ENCODE measurements at regions of chr9 and their contacts with region 1.

Region 1: DNA sequence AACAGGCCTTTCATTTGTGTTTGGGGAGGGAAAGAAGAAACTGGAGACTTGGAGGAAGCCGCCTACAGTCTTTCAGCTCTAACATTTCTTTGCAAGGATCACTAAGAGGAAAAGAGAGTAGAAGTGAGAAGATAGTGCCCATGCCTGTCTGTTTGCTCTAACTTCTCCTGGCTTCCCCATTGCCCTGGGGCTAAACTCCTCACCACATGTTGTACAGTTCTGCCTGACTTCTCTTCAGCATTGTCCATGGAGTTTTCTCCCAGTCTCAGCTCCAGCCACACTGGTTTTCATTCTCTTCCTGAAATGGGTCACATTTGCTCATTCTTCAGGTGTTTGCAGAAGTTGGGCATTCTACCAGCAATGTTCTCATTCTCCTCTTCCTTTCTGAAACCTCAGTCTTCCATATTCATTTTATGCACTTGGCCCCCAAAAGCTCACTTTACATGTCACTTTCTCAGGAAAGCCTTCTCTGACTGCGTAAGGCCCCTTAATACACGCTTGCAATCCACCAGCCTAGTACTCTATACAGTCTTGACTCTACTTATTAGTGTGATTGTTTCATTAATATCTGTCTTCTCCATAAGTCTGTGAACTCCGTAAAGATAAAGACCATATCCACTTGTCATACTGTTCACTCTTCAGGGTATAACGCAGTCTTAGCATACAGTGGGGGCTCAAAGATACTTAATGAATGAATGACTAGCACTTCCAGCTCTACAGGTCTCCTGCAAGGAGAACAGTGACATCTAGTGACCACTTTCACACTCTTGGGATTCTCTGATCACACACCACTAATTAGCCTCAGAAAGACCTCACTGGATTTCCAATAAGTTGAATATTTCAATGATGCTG is 40.2 kb upstream of the TRIM32 start:
- DNase-seq: peak; percentile 61
- ATAC-seq: peak; percentile 80
- H3K4me3 ChIP-seq: no peak overlapping the region
- H3K27ac ChIP-seq: no peak overlapping the region
- H3K4me1 ChIP-seq: peaks cover 4% of the 10 kb centered on the region
- H3K27me3 ChIP-seq: no peaks in the 10 kb centered on the region
- CTCF ChIP-seq: peak; percentile 72
- POLR2A ChIP-seq: no peak
- RAD21 ChIP-seq: peak; percentile 79

Region 2: GRCh38 chr9:116377479-116377779 is 269.5 kb before region 1 on chr9:
- CTCF ChIA-PET with region 1: no interaction called
- POLR2A ChIA-PET with region 1: no interaction called
- dilution Hi-C with region 1: no loop called
- in situ Hi-C with region 1: no loop called
- intact Hi-C with region 1: loop called (anchors 10 kb)
- DNase-seq: peak; percentile 75
- ATAC-seq: peak; percentile 86
- H3K4me3 ChIP-seq: no peak overlapping the region
- H3K27ac ChIP-seq: 0 out of 2 replicates have a peak overlapping the region, but pooled peaks have one; percentile 4
- H3K4me1 ChIP-seq: peaks cover 17% of the 10 kb centered on the region
- H3K27me3 ChIP-seq: no peaks in the 10 kb centered on the region
- CTCF ChIP-seq: no peak
- POLR2A ChIP-seq: no peak
- RAD21 ChIP-seq: no peak

Region 3: DNA sequence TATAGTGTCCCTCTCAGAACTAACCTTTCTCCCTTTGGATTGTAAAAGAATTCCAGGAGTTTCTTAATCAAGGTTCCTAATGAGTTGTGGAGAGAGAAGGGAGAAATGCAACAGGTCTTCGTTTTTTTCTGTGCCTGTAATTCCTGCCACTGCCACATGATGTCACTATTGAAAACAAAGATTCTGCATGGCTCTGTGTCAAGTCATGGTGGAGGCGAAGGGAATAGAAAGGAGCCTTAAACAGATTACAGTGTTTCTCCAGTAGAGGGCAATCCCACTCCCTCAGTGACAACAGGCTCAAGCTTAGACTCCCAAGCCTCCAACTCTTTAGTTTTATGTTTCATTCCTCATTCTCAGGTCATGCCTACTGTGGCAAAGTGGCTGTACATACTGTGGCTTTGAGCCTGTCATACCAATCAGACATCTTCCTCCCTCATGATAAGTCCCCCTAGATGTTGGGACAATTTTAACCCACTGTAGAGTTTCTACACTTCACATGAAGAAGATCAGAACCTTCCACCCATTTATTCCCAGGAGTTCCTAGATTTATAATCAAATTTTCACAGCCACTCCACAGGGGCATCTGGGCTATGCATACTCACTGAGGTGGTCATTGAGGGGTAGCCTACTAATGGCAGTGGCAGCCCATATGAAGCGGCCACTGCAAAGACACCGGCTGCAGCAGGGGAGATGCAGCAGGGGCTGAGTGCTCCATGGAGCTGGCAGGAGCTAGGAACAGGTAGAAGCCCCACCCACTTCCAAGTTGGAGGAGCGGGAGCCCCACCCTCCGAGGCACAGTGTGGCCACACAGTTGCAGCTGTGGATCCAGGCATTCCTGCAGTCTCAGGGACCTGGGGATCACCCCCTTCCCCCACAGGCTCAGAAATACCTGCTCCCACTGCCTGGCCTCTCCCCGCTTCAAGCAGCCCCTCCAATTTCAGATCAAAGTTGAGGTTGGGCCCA is 57.2 kb before region 1 on chr9:
- CTCF ChIA-PET with region 1: interaction called, 3 read pairs
- POLR2A ChIA-PET with region 1: no interaction called
- dilution Hi-C with region 1: no loop called
- in situ Hi-C with region 1: no loop called
- intact Hi-C with region 1: loop called (anchors 1 kb)
- DNase-seq: peak; percentile 69
- ATAC-seq: peak; percentile 54
- H3K4me3 ChIP-seq: no peak overlapping the region
- H3K27ac ChIP-seq: no peak overlapping the region
- H3K4me1 ChIP-seq: peaks cover 2% of the 10 kb centered on the region; the same call in 1 of the 2 replicates
- H3K27me3 ChIP-seq: no peaks in the 10 kb centered on the region
- CTCF ChIP-seq: peak; percentile 64
- POLR2A ChIP-seq: no peak
- RAD21 ChIP-seq: peak; percentile 60

Region 4: DNA sequence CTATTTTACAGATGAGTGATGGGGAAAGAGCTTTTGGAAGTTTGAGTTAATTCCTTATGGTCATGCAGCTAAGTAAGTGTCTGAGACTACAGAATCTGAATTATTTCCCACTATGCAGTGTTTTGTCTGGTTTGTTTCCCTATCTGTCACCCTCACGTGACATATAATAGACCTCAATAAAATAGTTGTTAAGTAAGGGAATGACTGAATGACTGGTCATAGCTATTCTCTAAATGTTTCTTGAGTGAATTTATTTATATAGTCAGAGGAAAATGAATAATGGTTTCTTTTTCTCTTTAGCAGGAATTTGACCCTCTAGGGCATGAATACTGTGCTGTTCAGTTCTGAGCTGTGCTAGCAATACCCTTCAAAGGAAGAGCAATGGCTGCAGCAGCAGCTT is 50.5 kb after region 1 on chr9:
- CTCF ChIA-PET with region 1: no interaction called
- POLR2A ChIA-PET with region 1: no interaction called
- dilution Hi-C with region 1: no loop called
- in situ Hi-C with region 1: no loop called
- intact Hi-C with region 1: no loop called
- DNase-seq: peak; percentile 77
- ATAC-seq: peak; percentile 80
- H3K4me3 ChIP-seq: no peak overlapping the region
- H3K27ac ChIP-seq: no peak overlapping the region
- H3K4me1 ChIP-seq: peaks cover 16% of the 10 kb centered on the region
- H3K27me3 ChIP-seq: no peaks in the 10 kb centered on the region
- CTCF ChIP-seq: no peak
- POLR2A ChIP-seq: no peak
- RAD21 ChIP-seq: no peak

Region 5: GRCh38 chr9:117091529-117091928 is 444.6 kb after region 1 on chr9:
- CTCF ChIA-PET with region 1: no interaction called
- POLR2A ChIA-PET with region 1: no interaction called
- dilution Hi-C with region 1: no loop called
- in situ Hi-C with region 1: no loop called
- intact Hi-C with region 1: no loop called
- DNase-seq: no peak
- ATAC-seq: no peak
- H3K4me3 ChIP-seq: no peak overlapping the region
- H3K27ac ChIP-seq: no peak overlapping the region
- H3K4me1 ChIP-seq: peaks cover 2% of the 10 kb centered on the region; the same call in 1 of the 2 replicates
- H3K27me3 ChIP-seq: no peaks in the 10 kb centered on the region
- CTCF ChIP-seq: no peak
- POLR2A ChIP-seq: no peak
- RAD21 ChIP-seq: no peak

Measured in IMR-90 (cell line).